ENCODE measurements at regions of chr3 and their contacts with region 1.

Region 1: GRCh38 chr3:185362850-185363661 is at the start of gene MAP3K13:
- DNase-seq: peak; percentile 97
- ATAC-seq: peak; percentile 93
- H3K4me3 ChIP-seq: peak within 1 kb of the TSS; percentile 80
- H3K27ac ChIP-seq: peak within 1 kb of the TSS; percentile 20
- H3K4me1 ChIP-seq: peaks cover 47% of the 10 kb centered on the region
- H3K27me3 ChIP-seq: no peaks in the 10 kb centered on the region
- CTCF ChIP-seq: no peak
- total RNA-seq, gene MAP3K13: 24.0 and 24.4 TPM in 2 replicates

Region 2: DNA sequence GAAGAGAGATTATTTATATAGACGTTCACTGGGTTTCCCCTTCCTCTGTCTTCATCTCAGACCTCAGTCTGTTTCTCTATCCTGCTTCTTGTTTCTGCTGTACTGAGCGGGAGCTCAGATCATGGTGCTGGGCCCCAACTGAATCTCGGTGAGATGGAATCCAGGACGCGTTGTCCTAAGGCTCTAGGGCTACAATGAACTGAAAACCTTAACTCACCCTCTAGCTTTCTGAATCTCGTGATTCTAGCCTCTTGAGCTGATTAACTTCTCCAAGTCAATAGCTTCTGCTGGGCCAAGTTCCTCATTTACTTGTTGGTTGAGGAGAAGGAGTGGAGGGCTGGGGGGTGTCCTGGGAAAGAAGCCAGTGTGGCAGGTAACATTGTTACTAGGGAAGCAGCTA is 32.8 kb before region 1 on chr3:
- CTCF ChIA-PET with region 1: no interaction called
- POLR2A ChIA-PET with region 1: no interaction called
- intact Hi-C with region 1: no loop called
- DNase-seq: no peak
- ATAC-seq: no peak
- H3K4me3 ChIP-seq: no peak overlapping the region
- H3K27ac ChIP-seq: no peak overlapping the region
- H3K4me1 ChIP-seq: peaks cover 36% of the 10 kb centered on the region
- H3K27me3 ChIP-seq: no peaks in the 10 kb centered on the region
- CTCF ChIP-seq: no peak

Region 3: GRCh38 chr3:185552358-185552877 is 189.4 kb after region 1 on chr3 and contains the start of gene LIPH:
- CTCF ChIA-PET with region 1: no interaction called
- POLR2A ChIA-PET with region 1: interaction called, 3 read pairs
- intact Hi-C with region 1: loop called (anchors 10 kb)
- DNase-seq: peak; percentile 75
- ATAC-seq: peak; percentile 72
- H3K4me3 ChIP-seq: peak within 1 kb of the TSS; percentile 34
- H3K27ac ChIP-seq: peak within 1 kb of the TSS; percentile 39
- H3K4me1 ChIP-seq: peaks cover 51% of the 10 kb centered on the region
- H3K27me3 ChIP-seq: no peaks in the 10 kb centered on the region
- CTCF ChIP-seq: no peak
- total RNA-seq, gene LIPH: 0.35 and 1.0 TPM in 2 replicates